Cardiac septum (tissue), 1 donor: ENCODE measurements at regions of chr1 and their contacts with region 1.

Region 1: GRCh38 chr1:150281837-150282653 is at the start of gene CIART:
- DNase-seq: peak; percentile 95
- total RNA-seq, gene CIART: 10.0 TPM

Region 2: GRCh38 chr1:150259758-150260669 is 22.0 kb before region 1 on chr1:
- intact Hi-C with region 1: loop called (anchors 1 kb)
- DNase-seq: no peak